ENCODE measurements at regions of chr10 and their contacts with region 1.

Region 1: DNA sequence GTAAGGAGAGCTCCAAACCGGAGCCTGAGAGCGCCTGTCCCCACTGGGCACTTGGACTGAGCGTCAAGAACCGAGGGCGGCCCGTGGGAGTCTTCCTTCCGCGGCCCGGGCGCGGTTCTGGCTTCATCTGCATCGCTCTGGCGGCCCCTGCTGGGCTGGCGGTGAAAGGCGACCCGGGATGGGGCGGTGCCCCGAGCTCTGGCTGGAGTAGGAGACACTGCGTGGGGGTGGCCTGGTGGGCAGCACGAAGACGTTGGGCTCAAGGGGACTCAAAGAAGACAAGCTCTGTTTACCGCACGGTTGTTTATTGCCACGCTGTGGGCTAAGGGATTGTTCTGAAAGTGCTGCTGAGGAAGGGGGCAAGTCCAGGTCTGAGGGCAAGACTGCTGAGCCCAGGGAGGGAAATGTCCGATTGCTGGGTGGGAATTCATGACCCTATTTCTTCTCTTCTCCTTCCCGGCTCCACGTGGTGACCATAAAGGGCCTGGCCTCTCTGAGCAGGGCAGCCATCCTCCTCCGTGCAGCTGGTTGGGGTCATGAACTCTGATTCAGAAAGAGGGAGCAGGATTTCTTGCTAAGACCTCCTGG is 29.8 kb downstream of the PLAU start:
- DNase-seq: peak; percentile 91
- H3K4me3 ChIP-seq: peak overlapping the region in 1 of 2 experiments; percentile 14; a peak in 1 of 4 replicates
- H3K27ac ChIP-seq: peak overlapping the region in 1 of 2 experiments; percentile 12; a peak in 1 of 4 replicates
- H3K4me1 ChIP-seq: peaks cover 0 to 10% of the 10 kb centered on the region in 2 experiments; a peak in 2 of 4 replicates
- H3K27me3 ChIP-seq: no peaks in the 10 kb centered on the region
- CTCF ChIP-seq: peak; percentile 97
- EP300 ChIP-seq: no peak
- RAD21 ChIP-seq: peak; percentile 84

Region 2: DNA sequence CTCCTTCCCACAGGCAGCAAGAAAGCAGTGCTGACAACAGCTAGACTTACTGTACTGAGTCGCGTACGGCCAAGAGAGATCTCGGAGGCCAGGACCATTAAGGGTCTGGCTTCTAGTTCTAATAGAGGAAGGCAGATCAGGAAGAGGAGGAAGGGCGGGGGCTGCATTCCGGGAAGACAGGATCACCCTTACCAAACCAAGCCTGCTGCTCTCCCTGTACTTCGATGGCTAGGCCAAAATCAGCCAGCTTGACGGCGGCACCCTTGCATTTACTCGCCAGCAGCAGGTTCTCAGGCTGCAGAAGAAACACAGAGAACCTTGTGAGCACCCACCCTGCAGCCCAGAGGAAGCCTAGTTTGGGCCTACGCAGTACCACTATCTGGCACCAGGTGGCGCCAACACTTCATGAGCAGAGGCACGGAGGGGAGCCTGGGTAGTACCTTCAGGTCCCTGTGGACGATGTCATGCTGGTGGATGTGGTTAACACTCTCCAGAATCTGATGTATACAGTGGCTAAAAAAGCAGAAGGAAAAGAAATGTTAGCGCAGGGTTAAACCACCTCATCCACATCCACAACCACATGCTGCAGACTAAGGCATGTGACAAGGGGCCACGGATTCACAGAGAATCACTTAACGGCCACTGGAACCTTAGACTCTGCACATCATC is 91.8 kb before region 1 on chr10:
- CTCF ChIA-PET with region 1: interaction called, 50 read pairs
- POLR2A ChIA-PET with region 1: no interaction called
- DNase-seq: peak; percentile 91
- H3K4me3 ChIP-seq: peak overlapping the region in 1 of 2 experiments; percentile 6; a peak in 1 of 4 replicates
- H3K27ac ChIP-seq: no peak overlapping the region
- H3K4me1 ChIP-seq: peaks cover 0 to 11% of the 10 kb centered on the region in 2 experiments; a peak in 1 of 4 replicates
- H3K27me3 ChIP-seq: no peaks in the 10 kb centered on the region
- CTCF ChIP-seq: peak; percentile 99
- EP300 ChIP-seq: no peak
- RAD21 ChIP-seq: peak; percentile 97

Region 3: DNA sequence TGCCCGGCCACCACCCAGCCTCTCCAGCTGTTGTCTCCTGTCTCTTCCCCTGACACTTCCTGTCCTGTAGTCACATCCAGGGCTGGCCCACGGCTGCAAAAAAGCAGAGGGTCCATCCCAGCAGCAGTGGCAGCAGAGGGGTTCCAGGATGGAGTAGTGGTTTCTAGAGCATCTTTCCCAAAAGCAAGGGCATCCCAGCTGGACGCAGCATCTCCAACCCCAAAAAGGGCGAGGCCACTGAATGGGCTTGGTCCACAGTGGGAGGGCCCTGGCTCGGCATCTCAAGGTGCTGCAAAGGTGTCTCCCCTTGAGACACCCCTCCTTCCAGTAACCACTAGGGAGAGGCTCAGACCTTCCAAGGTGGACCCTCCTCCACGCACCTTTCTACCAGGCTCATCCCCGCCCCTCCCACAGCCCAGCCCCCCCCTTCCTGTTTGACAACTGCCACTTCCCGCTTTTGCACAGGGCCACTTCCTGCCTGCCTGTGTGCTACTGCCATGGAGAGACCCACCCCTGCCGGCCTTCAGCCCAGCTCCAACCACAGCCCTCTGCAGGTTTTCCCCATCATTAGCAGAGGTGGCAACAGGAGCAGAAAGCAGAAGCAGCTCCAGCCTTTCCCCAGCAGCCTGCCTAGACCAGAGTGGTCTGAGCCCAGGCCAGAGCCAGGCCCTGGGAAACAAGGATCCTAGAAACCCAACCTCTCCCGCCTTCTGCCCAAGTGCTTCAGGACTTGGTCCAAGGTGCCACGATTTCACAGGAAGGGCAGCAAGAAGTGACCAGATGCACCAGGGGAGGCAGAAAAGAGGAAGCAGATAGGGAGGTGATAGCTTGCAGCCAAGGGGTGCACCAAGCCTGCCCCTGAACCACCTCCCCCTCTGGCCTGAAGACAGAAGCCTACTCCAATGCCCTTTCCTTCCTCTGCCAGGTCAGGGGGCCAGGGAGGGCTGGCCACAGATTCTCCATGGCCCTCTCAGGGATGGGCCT is 75.0 kb before region 1 on chr10:
- CTCF ChIA-PET with region 1: interaction called, 16 read pairs
- POLR2A ChIA-PET with region 1: no interaction called
- DNase-seq: no peak
- H3K4me3 ChIP-seq: no peak overlapping the region
- H3K27ac ChIP-seq: no peak overlapping the region
- H3K4me1 ChIP-seq: peaks cover 0 to 6% of the 10 kb centered on the region in 2 experiments; a peak in 1 of 4 replicates
- H3K27me3 ChIP-seq: no peaks in the 10 kb centered on the region
- CTCF ChIP-seq: no peak
- EP300 ChIP-seq: no peak
- RAD21 ChIP-seq: no peak

Region 4: GRCh38 chr10:73899423-73899822 is 41.3 kb before region 1 on chr10:
- CTCF ChIA-PET with region 1: interaction called, 472 read pairs
- POLR2A ChIA-PET with region 1: no interaction called
- DNase-seq: no peak
- H3K4me3 ChIP-seq: no peak overlapping the region
- H3K27ac ChIP-seq: peak overlapping the region in 1 of 2 experiments; percentile 41; a peak in 2 of 4 replicates
- H3K4me1 ChIP-seq: peaks cover 0 to 8% of the 10 kb centered on the region in 2 experiments; a peak in 1 of 4 replicates
- H3K27me3 ChIP-seq: no peaks in the 10 kb centered on the region
- CTCF ChIP-seq: no peak
- EP300 ChIP-seq: peak in 1 of 2 experiments; percentile 92; a peak in 2 of 4 replicates
- RAD21 ChIP-seq: no peak

Region 5: DNA sequence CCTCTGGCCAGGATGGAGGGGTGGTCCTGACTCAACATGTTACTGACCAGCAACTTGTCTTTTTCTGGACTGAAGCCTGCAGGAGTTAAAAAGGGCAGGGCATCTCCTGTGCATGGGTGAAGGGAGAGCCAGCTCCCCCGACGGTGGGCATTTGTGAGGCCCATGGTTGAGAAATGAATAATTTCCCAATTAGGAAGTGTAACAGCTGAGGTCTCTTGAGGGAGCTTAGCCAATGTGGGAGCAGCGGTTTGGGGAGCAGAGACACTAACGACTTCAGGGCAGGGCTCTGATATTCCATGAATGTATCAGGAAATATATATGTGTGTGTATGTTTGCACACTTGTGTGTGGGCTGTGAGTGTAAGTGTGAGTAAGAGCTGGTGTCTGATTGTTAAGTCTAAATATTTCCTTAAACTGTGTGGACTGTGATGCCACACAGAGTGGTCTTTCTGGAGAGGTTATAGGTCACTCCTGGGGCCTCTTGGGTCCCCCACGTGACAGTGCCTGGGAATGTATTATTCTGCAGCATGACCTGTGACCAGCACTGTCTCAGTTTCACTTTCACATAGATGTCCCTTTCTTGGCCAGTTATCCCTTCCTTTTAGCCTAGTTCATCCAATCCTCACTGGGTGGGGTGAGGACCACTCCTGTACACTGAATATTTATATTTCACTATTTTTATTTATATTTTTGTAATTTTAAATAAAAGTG is 23.8 kb before region 1 on chr10:
- CTCF ChIA-PET with region 1: interaction called, 19 read pairs
- POLR2A ChIA-PET with region 1: no interaction called
- DNase-seq: no peak
- H3K4me3 ChIP-seq: no peak overlapping the region
- H3K27ac ChIP-seq: no peak overlapping the region
- H3K4me1 ChIP-seq: peaks cover 5 to 6% of the 10 kb centered on the region in 2 experiments; a peak in 1 of 4 replicates
- H3K27me3 ChIP-seq: no peaks in the 10 kb centered on the region
- CTCF ChIP-seq: no peak
- EP300 ChIP-seq: no peak
- RAD21 ChIP-seq: no peak

Region 6: GRCh38 chr10:73965890-73966768 is 25.4 kb after region 1 on chr10:
- CTCF ChIA-PET with region 1: interaction called, 11 read pairs
- POLR2A ChIA-PET with region 1: no interaction called
- DNase-seq: no peak
- H3K4me3 ChIP-seq: 0 out of 4 replicates have a peak overlapping the region, but pooled peaks of 1 of the 2 experiments have one; percentile 1
- H3K27ac ChIP-seq: peak overlapping the region; percentile 77 to 95
- H3K4me1 ChIP-seq: peaks cover 0 to 27% of the 10 kb centered on the region in 2 experiments; a peak in 2 of 4 replicates
- H3K27me3 ChIP-seq: no peaks in the 10 kb centered on the region
- CTCF ChIP-seq: no peak
- EP300 ChIP-seq: peak in 1 of 2 experiments; percentile 79; a peak in 2 of 4 replicates
- RAD21 ChIP-seq: no peak

Measured in SK-N-SH (cell line).